GM12878 (cell line): ENCODE measurements at regions of chr10 and their contacts with region 1.

Region 1: GRCh38 chr10:93503075-93503474 is 6.7 kb downstream of the CEP55 start:
- DNase-seq: peak; percentile 33
- ATAC-seq: peak; percentile 86
- H3K4me3 ChIP-seq: peak overlapping the region; percentile 19
- H3K27ac ChIP-seq: peak overlapping the region; percentile 75
- H3K4me1 ChIP-seq: peaks cover 3% of the 10 kb centered on the region; the same call in 1 of the 2 replicates
- H3K27me3 ChIP-seq: no peaks in the 10 kb centered on the region
- CTCF ChIP-seq: no peak
- EP300 ChIP-seq: no peak
- POLR2A ChIP-seq: no peak
- RAD21 ChIP-seq: no peak

Region 2: GRCh38 chr10:93074147-93074596 is 428.9 kb before region 1 on chr10:
- CTCF ChIA-PET with region 1: no interaction called
- POLR2A ChIA-PET with region 1: no interaction called
- RAD21 ChIA-PET with region 1: no interaction called
- SMC1A ChIA-PET with region 1: no interaction called
- in situ Hi-C with region 1: no loop called
- intact Hi-C with region 1: loop called (anchors 10 kb)
- DNase-seq: no peak
- ATAC-seq: peak; percentile 26
- H3K4me3 ChIP-seq: peak overlapping the region; percentile 27; the same call in 1 of the 2 replicates
- H3K27ac ChIP-seq: no peak overlapping the region
- H3K4me1 ChIP-seq: peaks cover 18% of the 10 kb centered on the region
- H3K27me3 ChIP-seq: peaks cover 28 to 32% of the 10 kb centered on the region in 2 experiments; a peak in 3 of 4 replicates
- CTCF ChIP-seq: no peak
- EP300 ChIP-seq: no peak
- POLR2A ChIP-seq: no peak
- RAD21 ChIP-seq: no peak

Region 3: GRCh38 chr10:93199191-93199751 is 303.8 kb before region 1 on chr10:
- CTCF ChIA-PET with region 1: no interaction called
- POLR2A ChIA-PET with region 1: no interaction called
- RAD21 ChIA-PET with region 1: no interaction called
- SMC1A ChIA-PET with region 1: no interaction called
- in situ Hi-C with region 1: no loop called
- intact Hi-C with region 1: no loop called
- DNase-seq: no peak
- ATAC-seq: peak; percentile 35; the same call in 1 of the 3 replicates
- H3K4me3 ChIP-seq: peak overlapping the region; percentile 43; the same call in 1 of the 2 replicates
- H3K27ac ChIP-seq: no peak overlapping the region
- H3K4me1 ChIP-seq: peaks cover 7% of the 10 kb centered on the region
- H3K27me3 ChIP-seq: no peaks in the 10 kb centered on the region
- CTCF ChIP-seq: no peak
- EP300 ChIP-seq: no peak
- POLR2A ChIP-seq: no peak
- RAD21 ChIP-seq: no peak

Region 4: GRCh38 chr10:93515071-93516005 is 12.3 kb after region 1 on chr10:
- CTCF ChIA-PET with region 1: interaction called, 45 read pairs
- POLR2A ChIA-PET with region 1: interaction called, 4 read pairs
- RAD21 ChIA-PET with region 1: interaction called, 7 read pairs
- SMC1A ChIA-PET with region 1: interaction called, 20 read pairs
- in situ Hi-C with region 1: no loop called
- intact Hi-C with region 1: no loop called
- DNase-seq: no peak
- ATAC-seq: no peak
- H3K4me3 ChIP-seq: no peak overlapping the region
- H3K27ac ChIP-seq: no peak overlapping the region
- H3K4me1 ChIP-seq: no peaks in the 10 kb centered on the region
- H3K27me3 ChIP-seq: no peaks in the 10 kb centered on the region
- CTCF ChIP-seq: no peak
- EP300 ChIP-seq: no peak
- POLR2A ChIP-seq: no peak
- RAD21 ChIP-seq: no peak